Activated CD4-positive, alpha-beta T cell treated with anti-CD3 and anti-CD28 coated beads for 36 hours (primary cell): ENCODE measurements at regions of chr1 and their contacts with region 1.

Region 1: GRCh38 chr1:168408536-168409242 is 128.0 kb downstream of the TBX19 start:
- DNase-seq: peak; percentile 79
- ATAC-seq: peak; percentile 90
- H3K4me3 Mint-ChIP-seq: peak overlapping the region; percentile 10
- H3K27ac Mint-ChIP-seq: peak overlapping the region; percentile 86
- H3K4me1 Mint-ChIP-seq: peaks cover 37% of the 10 kb centered on the region
- H3K27me3 Mint-ChIP-seq: no peaks in the 10 kb centered on the region

Region 2: DNA sequence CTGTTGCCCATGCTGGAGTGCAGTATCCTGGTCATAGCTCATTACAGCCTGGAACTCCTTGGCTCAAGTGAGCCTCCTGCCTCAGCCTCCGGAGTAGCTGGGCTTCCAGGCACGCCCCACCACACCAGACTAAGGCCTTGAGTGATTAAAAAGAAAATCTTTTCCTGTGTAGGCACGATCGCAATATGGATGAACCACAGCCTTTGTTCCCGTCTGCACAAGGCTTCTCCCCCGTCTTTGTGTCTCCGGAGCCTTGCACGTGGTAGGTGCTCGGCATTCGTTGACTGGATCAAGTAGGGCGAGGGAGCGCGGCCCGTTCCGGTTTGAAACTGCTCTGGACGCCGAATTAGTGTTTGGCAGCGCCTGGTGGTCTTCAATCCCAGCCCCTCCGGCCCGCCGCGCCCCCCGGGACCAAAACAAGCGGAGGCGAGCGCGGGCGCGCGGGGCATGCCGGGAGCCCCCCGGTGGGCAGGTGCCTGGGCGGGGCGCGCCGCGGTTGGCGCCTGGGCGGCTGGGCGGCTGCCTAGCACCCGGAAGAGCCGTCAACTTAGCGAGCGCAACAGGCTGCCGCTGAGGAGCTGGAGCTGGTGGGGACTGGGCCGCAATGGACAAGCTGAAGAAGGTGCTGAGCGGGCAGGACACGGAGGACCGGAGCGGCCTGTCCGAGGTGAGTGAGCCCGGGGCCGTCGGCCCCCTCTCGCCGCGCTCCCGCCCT is 183.1 kb before region 1 on chr1 and contains the start of gene SFT2D2:
- CTCF ChIA-PET with region 1: no interaction called
- POLR2A ChIA-PET with region 1: no interaction called
- intact Hi-C with region 1: loop called in 1 of 2 experiments (anchors 5 kb)
- DNase-seq: peak; percentile 88
- ATAC-seq: peak; percentile 90
- H3K4me3 Mint-ChIP-seq: peak within 1 kb of the TSS; percentile 86
- H3K27ac Mint-ChIP-seq: peak within 1 kb of the TSS; percentile 86
- H3K4me1 Mint-ChIP-seq: peaks cover 49% of the 10 kb centered on the region
- H3K27me3 Mint-ChIP-seq: peaks cover 3% of the 10 kb centered on the region
- total RNA-seq, gene SFT2D2: 25.2 to 42.3 TPM

Region 3: GRCh38 chr1:168301664-168302334 is 106.9 kb before region 1 on chr1:
- CTCF ChIA-PET with region 1: no interaction called
- POLR2A ChIA-PET with region 1: no interaction called
- intact Hi-C with region 1: no loop called
- DNase-seq: no peak
- ATAC-seq: no peak
- H3K4me3 Mint-ChIP-seq: no peak overlapping the region
- H3K27ac Mint-ChIP-seq: no peak overlapping the region
- H3K4me1 Mint-ChIP-seq: no peaks in the 10 kb centered on the region
- H3K27me3 Mint-ChIP-seq: no peaks in the 10 kb centered on the region

Region 4: GRCh38 chr1:168386949-168387586 is 21.6 kb before region 1 on chr1:
- CTCF ChIA-PET with region 1: interaction called, 3 read pairs
- POLR2A ChIA-PET with region 1: interaction called, 3 read pairs
- intact Hi-C with region 1: loop called in 1 of 2 experiments (anchors 1 kb)
- DNase-seq: peak; percentile 89
- ATAC-seq: peak; percentile 95
- H3K4me3 Mint-ChIP-seq: peak overlapping the region; percentile 15
- H3K27ac Mint-ChIP-seq: peak overlapping the region; percentile 82
- H3K4me1 Mint-ChIP-seq: peaks cover 19% of the 10 kb centered on the region
- H3K27me3 Mint-ChIP-seq: peaks cover 3% of the 10 kb centered on the region

Region 5: GRCh38 chr1:168396940-168397698 is 11.6 kb before region 1 on chr1:
- CTCF ChIA-PET with region 1: no interaction called
- POLR2A ChIA-PET with region 1: no interaction called
- intact Hi-C with region 1: loop called in 1 of 2 experiments (anchors 1 kb)
- DNase-seq: no peak
- ATAC-seq: no peak
- H3K4me3 Mint-ChIP-seq: no peak overlapping the region
- H3K27ac Mint-ChIP-seq: no peak overlapping the region
- H3K4me1 Mint-ChIP-seq: peaks cover 15% of the 10 kb centered on the region
- H3K27me3 Mint-ChIP-seq: peaks cover 5% of the 10 kb centered on the region

Region 6: DNA sequence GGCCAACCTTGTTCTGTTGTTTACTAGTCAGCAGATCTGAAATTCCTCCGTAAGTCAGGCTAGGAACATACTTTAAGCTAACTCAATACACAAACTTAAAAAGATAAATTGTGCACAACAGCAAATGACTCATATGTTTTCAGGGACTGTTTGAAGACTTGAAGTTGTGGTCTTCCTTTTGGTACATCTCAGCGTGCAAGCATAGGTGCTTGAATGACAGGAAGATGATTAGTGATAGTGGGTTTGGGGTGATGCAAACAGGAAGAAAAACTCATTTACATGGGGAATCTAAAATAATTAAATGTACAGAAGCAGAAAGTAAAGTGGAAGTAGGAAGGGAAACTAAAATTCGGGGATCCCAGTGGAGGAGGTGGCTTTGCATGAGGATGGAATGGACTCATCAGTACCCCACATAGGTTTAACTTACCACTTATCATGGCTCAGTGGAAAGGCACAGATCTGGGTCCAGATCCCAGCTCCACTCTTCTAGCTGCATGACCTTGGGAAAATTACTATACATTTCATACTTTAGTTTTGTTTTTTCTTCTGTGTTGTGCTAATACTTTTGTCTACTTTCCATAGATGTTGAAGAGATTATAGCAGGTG is 12.8 kb after region 1 on chr1:
- CTCF ChIA-PET with region 1: no interaction called
- POLR2A ChIA-PET with region 1: no interaction called
- intact Hi-C with region 1: loop called (anchors 1 kb)
- DNase-seq: no peak
- ATAC-seq: peak; percentile 97
- H3K4me3 Mint-ChIP-seq: peak overlapping the region; percentile 6
- H3K27ac Mint-ChIP-seq: peak overlapping the region; percentile 84
- H3K4me1 Mint-ChIP-seq: peaks cover 20% of the 10 kb centered on the region
- H3K27me3 Mint-ChIP-seq: no peaks in the 10 kb centered on the region

Region 7: GRCh38 chr1:168585191-168585590 is 176.5 kb after region 1 on chr1:
- CTCF ChIA-PET with region 1: no interaction called
- POLR2A ChIA-PET with region 1: no interaction called
- intact Hi-C with region 1: no loop called
- DNase-seq: no peak
- ATAC-seq: no peak
- H3K4me3 Mint-ChIP-seq: no peak overlapping the region
- H3K27ac Mint-ChIP-seq: no peak overlapping the region
- H3K4me1 Mint-ChIP-seq: no peaks in the 10 kb centered on the region
- H3K27me3 Mint-ChIP-seq: no peaks in the 10 kb centered on the region